ENCODE measurements at regions of chr5 and their contacts with region 1.

Region 1: GRCh38 chr5:3854188-3854821 is 258.7 kb downstream of the IRX1 start:
- DNase-seq: no peak
- H3K4me3 ChIP-seq: no peak overlapping the region
- H3K27ac ChIP-seq: no peak overlapping the region
- H3K4me1 ChIP-seq: no peaks in the 10 kb centered on the region
- H3K27me3 ChIP-seq: no peaks in the 10 kb centered on the region
- CTCF ChIP-seq: no peak
- POLR2A ChIP-seq: no peak

Region 2: GRCh38 chr5:2602451-2603271 is 1251.6 kb before region 1 on chr5:
- intact Hi-C with region 1: loop called (anchors 5 kb)
- DNase-seq: no peak
- H3K4me3 ChIP-seq: no peak overlapping the region
- H3K27ac ChIP-seq: no peak overlapping the region
- H3K4me1 ChIP-seq: no peaks in the 10 kb centered on the region
- H3K27me3 ChIP-seq: no peaks in the 10 kb centered on the region
- CTCF ChIP-seq: no peak
- POLR2A ChIP-seq: no peak

Region 3: GRCh38 chr5:2779453-2779852 is 1074.9 kb before region 1 on chr5:
- intact Hi-C with region 1: loop called (anchors 10 kb)
- DNase-seq: no peak
- H3K4me3 ChIP-seq: no peak overlapping the region
- H3K27ac ChIP-seq: peak overlapping the region; percentile 70 to 75
- H3K4me1 ChIP-seq: no peaks in the 10 kb centered on the region
- H3K27me3 ChIP-seq: no peaks in the 10 kb centered on the region
- CTCF ChIP-seq: no peak
- POLR2A ChIP-seq: no peak

Region 4: DNA sequence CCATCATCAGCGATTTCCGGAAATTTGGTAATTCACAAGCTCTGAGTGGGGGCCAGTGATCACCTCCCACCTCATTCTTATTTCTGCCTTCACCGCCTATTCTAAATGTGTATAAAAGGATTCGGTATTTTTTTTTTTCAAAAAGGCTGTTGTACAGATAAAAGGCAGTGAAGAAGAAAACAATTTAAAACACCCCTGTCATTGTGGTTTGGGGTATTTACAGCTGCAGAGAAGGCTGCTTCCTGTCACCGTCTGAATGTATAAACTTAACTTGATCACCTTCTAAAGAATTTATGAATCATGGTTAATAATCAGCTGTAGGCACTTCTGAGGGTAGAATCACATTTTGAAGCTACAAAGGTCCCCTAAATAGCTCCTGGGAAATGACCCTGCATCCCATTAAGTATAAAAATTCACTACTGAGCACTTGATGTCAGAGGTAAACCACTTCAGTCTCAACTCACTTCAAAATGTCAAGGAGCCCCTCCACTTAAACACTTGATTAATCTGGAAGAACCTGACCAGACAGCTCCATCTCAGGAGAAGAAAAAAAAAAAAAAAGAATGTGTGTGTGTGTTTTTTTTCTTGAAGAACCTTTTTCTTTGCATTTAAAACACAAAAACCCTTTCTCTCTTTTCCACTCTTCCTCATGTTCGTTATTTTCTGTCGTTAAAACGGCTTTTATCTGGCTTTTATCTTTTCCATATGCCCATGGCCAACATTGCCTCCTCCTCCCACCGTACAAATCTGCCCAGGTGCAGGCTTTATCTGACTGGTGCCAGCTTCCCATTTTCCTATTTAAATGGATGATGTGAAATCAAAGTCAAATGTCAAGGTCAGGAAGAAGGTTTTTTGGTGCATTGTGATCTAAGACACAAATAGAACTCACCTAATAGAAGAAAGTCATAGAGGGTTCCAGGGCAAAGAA is 32.5 kb after region 1 on chr5:
- intact Hi-C with region 1: no loop called
- DNase-seq: no peak
- H3K4me3 ChIP-seq: no peak overlapping the region
- H3K27ac ChIP-seq: no peak overlapping the region
- H3K4me1 ChIP-seq: no peaks in the 10 kb centered on the region
- H3K27me3 ChIP-seq: no peaks in the 10 kb centered on the region
- CTCF ChIP-seq: no peak
- POLR2A ChIP-seq: no peak

Measured in breast epithelium (tissue), 4 donors.